HepG2 (cell line): ENCODE measurements at regions of chr10 and their contacts with region 1.

Region 1: GRCh38 chr10:132142411-132143161 is 44.2 kb upstream of the DPYSL4 start:
- DNase-seq: no peak
- ATAC-seq: peak; percentile 82
- H3K4me3 ChIP-seq: no peak overlapping the region
- H3K27ac ChIP-seq: no peak overlapping the region
- H3K4me1 ChIP-seq: no peaks in the 10 kb centered on the region
- H3K27me3 ChIP-seq: peaks cover 11 to 45% of the 10 kb centered on the region in 2 experiments
- CTCF ChIP-seq: peak; percentile 94
- EP300 ChIP-seq: no peak
- POLR2A ChIP-seq: no peak
- RAD21 ChIP-seq: peak; percentile 79

Region 2: DNA sequence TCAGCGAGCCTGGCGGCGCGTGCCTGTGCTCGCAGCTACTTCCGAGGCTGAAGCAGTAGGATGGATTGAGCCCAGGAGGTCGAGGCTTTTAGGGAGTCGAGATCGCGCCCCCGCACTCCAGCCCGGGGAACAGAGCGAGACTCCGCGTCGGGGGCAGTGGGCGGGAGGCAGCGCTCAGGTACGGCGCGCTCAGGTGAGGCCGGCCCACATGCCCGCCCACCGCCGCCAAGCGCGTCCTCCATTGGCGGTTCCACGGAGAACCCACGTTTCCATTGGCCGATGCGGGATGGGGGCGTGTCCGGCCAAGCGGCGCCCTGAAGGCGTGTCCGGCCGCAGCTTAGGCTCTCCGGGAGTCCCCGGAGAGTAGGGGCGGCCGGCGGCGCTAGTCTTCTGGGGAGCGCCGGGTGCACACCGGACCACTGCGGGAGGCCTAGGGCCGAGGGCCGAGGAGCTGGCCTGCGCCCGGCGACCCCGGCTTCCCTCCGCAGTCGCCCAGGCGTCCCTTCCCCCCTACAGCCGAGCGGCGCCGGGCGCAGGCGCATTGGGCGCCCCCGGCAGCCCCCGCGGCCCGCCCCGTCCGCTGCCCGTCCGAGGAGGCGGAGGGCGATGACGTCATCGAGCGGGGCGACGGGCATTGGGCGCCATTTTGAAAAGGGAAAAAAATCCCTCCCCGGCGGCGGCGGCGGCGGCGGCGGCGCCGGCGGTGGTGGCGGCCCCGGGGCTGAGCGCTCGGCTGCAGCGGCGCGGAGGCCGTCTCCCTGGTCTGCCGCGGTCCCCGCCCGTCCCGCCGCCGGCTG is 242.0 kb before region 1 on chr10 and contains the start of gene PPP2R2D:
- CTCF ChIA-PET with region 1: no interaction called
- POLR2A ChIA-PET with region 1: no interaction called
- in situ Hi-C with region 1: loop called (anchors 10 kb)
- intact Hi-C with region 1: no loop called
- DNase-seq: peak; percentile 87
- ATAC-seq: peak; percentile 92
- H3K4me3 ChIP-seq: peak within 1 kb of the TSS; percentile 93 to 94 (median 94)
- H3K27ac ChIP-seq: peak within 1 kb of the TSS; percentile 80
- H3K4me1 ChIP-seq: peaks cover 72% of the 10 kb centered on the region
- H3K27me3 ChIP-seq: peaks cover 2 to 12% of the 10 kb centered on the region in 2 experiments; a peak in 3 of 5 replicates
- CTCF ChIP-seq: no peak
- EP300 ChIP-seq: no peak
- POLR2A ChIP-seq: peak; percentile 68 to 84
- RAD21 ChIP-seq: peak; percentile 37; the same call in 1 of the 2 replicates
- total RNA-seq, gene PPP2R2D: 33.2 and 34.4 TPM in 2 replicates

Region 3: DNA sequence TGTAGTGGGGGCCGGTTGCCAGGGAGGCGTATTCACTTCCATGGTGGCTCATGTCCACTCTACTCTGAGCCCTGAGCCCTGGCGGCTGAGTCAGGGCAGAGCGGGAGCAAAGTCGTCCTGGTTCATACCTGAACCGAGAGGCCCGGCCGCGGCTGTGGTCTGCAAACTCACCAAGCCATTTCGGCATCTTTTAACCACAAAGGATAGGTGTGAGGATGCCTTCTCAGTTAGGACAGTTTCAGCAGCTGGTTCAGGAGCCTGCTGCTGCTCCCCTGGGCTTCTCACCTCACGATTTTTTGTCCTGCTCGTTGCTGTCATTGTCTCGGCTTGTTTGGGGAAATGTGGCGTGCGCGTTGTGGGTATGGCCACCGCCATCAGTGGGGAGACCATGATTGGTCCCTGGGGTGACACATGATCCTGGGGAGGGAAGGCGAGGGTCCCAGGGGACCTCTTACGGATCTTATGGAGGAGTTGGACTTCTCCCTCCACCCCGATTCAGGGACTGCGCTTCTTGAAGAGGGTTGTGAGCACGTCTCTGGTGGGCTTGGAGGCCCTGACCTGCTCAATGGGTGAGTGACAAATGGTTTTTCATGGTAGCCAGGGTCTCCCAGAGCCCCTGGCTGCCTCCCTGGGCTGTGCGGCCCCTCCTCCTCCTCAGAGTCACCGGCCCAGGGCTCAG is 421.4 kb after region 1 on chr10:
- CTCF ChIA-PET with region 1: no interaction called
- POLR2A ChIA-PET with region 1: no interaction called
- in situ Hi-C with region 1: no loop called
- intact Hi-C with region 1: no loop called
- DNase-seq: no peak
- ATAC-seq: peak; percentile 35; the same call in 2 of the 3 replicates
- H3K4me3 ChIP-seq: no peak overlapping the region
- H3K27ac ChIP-seq: no peak overlapping the region
- H3K4me1 ChIP-seq: no peaks in the 10 kb centered on the region
- H3K27me3 ChIP-seq: no peaks in the 10 kb centered on the region
- CTCF ChIP-seq: no peak
- EP300 ChIP-seq: no peak
- POLR2A ChIP-seq: no peak
- RAD21 ChIP-seq: no peak